Calu3 (cell line): ENCODE measurements at regions of chr15 and their contacts with region 1.

Region 1: GRCh38 chr15:31488426-31489204 is 162.0 kb downstream of the KLF13 start:
- DNase-seq: peak; percentile 45
- H3K4me3 Mint-ChIP-seq: no peak overlapping the region
- H3K27ac Mint-ChIP-seq: no peak overlapping the region
- H3K4me1 Mint-ChIP-seq: no peaks in the 10 kb centered on the region
- H3K27me3 Mint-ChIP-seq: no peaks in the 10 kb centered on the region
- CTCF ChIP-seq: peak; percentile 20

Region 2: DNA sequence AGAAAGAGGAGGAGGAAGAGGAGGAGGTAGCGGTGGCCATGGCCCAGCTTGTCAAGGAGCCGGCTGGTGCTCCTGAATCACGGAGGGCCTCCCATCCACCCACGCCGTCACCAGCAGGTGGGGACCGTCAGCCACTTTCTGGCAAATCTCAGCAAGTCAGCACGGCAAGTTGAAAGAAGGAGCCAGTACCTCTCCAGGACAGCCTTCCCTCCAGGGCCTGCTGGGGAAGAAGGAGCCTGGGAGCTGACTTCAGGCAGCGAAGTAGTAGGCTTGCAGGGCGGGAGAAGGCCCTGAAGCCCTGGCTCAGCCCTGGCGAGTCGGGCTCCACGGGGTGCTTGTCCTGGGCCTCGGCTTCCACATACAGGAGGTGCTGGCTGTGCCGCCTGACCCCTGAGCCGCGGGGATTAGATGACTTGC is 287.9 kb before region 1 on chr15:
- CTCF ChIA-PET with region 1: interaction called, 5 read pairs
- intact Hi-C with region 1: loop called (anchors 5 kb)
- DNase-seq: peak; percentile 21
- H3K4me3 Mint-ChIP-seq: no peak overlapping the region
- H3K27ac Mint-ChIP-seq: no peak overlapping the region
- H3K4me1 Mint-ChIP-seq: no peaks in the 10 kb centered on the region
- H3K27me3 Mint-ChIP-seq: peaks cover 23% of the 10 kb centered on the region
- CTCF ChIP-seq: no peak

Region 3: GRCh38 chr15:31526916-31527690 is 38.5 kb after region 1 on chr15:
- CTCF ChIA-PET with region 1: no interaction called
- intact Hi-C with region 1: no loop called
- DNase-seq: no peak
- H3K4me3 Mint-ChIP-seq: no peak overlapping the region
- H3K27ac Mint-ChIP-seq: no peak overlapping the region
- H3K4me1 Mint-ChIP-seq: no peaks in the 10 kb centered on the region
- H3K27me3 Mint-ChIP-seq: peaks cover 19% of the 10 kb centered on the region
- CTCF ChIP-seq: no peak